ENCODE measurements at regions of chr12 and their contacts with region 1.

Region 1: GRCh38 chr12:50986966-50987737 is 34.8 kb downstream of the HIGD1C start:
- DNase-seq: peak in 2 of 10 donors; percentile 23 to 60
- H3K4me3 ChIP-seq: peak overlapping the region in 1 of 59 donors; percentile 7
- H3K27ac ChIP-seq: peak overlapping the region in 49 of 59 donors; percentile 2 to 92 (median 61)
- H3K27me3 ChIP-seq: no peaks in the 10 kb centered on the region
- CTCF ChIP-seq: peak in 55 of 56 donors; percentile 39 to 82 (median 65)

Region 2: GRCh38 chr12:50825372-50825838 is 161.7 kb before region 1 on chr12:
- intact Hi-C with region 1: loop called (anchors 1 to 2 kb)
- DNase-seq: no peak
- H3K4me3 ChIP-seq: peak overlapping the region in 3 of 59 donors; percentile 6 to 20 (median 10)
- H3K27ac ChIP-seq: peak overlapping the region in 29 of 59 donors; percentile 1 to 65 (median 32)
- H3K27me3 ChIP-seq: no peaks in the 10 kb centered on the region
- CTCF ChIP-seq: peak; percentile 52 to 84 (median 70)

Region 3: GRCh38 chr12:50934981-50935807 is 52.0 kb before region 1 on chr12:
- intact Hi-C with region 1: loop called in 1 of 2 experiments (anchors 10 kb)
- DNase-seq: no peak
- H3K4me3 ChIP-seq: peak overlapping the region in 6 of 59 donors; percentile 0 to 20 (median 10)
- H3K27ac ChIP-seq: peak overlapping the region in 46 of 59 donors; percentile 3 to 77 (median 48)
- H3K27me3 ChIP-seq: no peaks in the 10 kb centered on the region
- CTCF ChIP-seq: no peak

Region 4: DNA sequence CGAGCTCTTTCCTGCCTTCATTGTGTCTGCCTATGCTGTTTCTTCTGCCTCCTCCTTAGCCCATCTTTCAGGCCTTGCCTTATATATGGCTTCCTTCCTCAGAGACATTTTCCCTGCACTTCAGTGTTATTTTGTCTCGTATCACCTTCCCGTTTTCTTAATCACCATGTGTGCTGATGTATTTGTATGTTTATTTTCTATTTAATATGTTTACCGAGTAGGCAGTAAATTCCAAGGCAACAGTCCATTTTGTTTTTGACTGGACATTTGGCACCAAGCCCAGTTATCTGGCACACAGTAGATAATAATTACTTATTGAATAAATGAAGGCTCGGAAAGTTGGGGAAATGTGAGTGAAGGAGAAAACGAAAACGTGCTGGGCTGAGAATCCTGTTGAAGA is 235.3 kb after region 1 on chr12:
- intact Hi-C with region 1: no loop called
- DNase-seq: no peak
- H3K4me3 ChIP-seq: peak overlapping the region in 9 of 59 donors; percentile 7 to 34 (median 15)
- H3K27ac ChIP-seq: peak overlapping the region in 1 of 59 donors; percentile 30
- H3K27me3 ChIP-seq: no peaks in the 10 kb centered on the region
- CTCF ChIP-seq: no peak